ENCODE measurements at regions of chr5 and their contacts with region 1.

Region 1: GRCh38 chr5:126354012-126354857 is 69.0 kb upstream of the GRAMD2B start:
- DNase-seq: peak in 4 of 5 donors; percentile 48 to 51 (median 50)
- H3K4me3 ChIP-seq: no peak overlapping the region
- H3K4me3 Mint-ChIP-seq: peak overlapping the region in 6 of 8 donors; percentile 27 to 68 (median 64)
- H3K27ac ChIP-seq: no peak overlapping the region
- H3K27ac Mint-ChIP-seq: peak overlapping the region in 4 of 7 donors; percentile 7 to 65 (median 50)
- H3K4me1 ChIP-seq: peaks cover 4% of the 10 kb centered on the region
- H3K4me1 Mint-ChIP-seq: peaks cover 4 to 12% (median 5%) of the 10 kb centered on the region in 4 donors
- H3K27me3 ChIP-seq: no peaks in the 10 kb centered on the region
- H3K27me3 Mint-ChIP-seq: peaks cover 7 to 8% of the 10 kb centered on the region in 2 donors

Region 2: GRCh38 chr5:126309860-126310259 is 44.4 kb before region 1 on chr5:
- CTCF ChIA-PET with region 1: no interaction called
- POLR2A ChIA-PET with region 1: no interaction called
- intact Hi-C with region 1: no loop called
- DNase-seq: no peak
- H3K4me3 ChIP-seq: no peak overlapping the region
- H3K4me3 Mint-ChIP-seq: no peak overlapping the region
- H3K27ac ChIP-seq: no peak overlapping the region
- H3K27ac Mint-ChIP-seq: no peak overlapping the region
- H3K4me1 ChIP-seq: no peaks in the 10 kb centered on the region
- H3K4me1 Mint-ChIP-seq: no peaks in the 10 kb centered on the region
- H3K27me3 ChIP-seq: no peaks in the 10 kb centered on the region
- H3K27me3 Mint-ChIP-seq: peaks cover 12 to 15% of the 10 kb centered on the region in 2 donors

Region 3: DNA sequence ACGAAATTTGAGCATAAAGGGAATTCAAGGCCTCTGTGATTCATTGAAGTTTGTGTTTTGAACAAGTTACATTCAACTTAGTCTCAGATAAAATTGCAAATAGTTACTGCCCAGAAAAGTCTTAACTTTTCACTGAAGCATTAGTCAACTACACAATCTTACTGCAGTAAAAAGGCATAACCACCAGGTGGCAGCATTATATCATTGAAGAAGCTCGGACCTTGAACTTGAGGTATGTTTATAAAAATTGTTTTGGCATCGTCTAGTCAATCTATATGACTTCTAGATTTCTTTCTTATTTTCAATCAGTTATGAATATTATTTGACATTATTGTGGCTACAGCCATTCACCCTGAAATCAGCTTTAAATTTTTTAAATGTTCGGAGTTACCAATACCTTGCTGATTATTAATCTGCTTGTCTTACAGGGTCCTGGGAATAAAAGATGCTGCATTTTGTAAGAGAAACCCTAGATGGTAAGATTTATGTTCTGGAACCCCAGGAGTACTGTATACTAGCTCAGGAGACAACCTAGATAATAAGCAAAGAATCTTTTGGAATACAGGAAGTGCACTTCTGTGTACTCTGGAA is 14.9 kb before region 1 on chr5:
- CTCF ChIA-PET with region 1: interaction called, 70 read pairs
- POLR2A ChIA-PET with region 1: interaction called, 3 read pairs
- intact Hi-C with region 1: loop called (anchors 1 kb)
- DNase-seq: peak; percentile 56 to 66 (median 58)
- H3K4me3 ChIP-seq: no peak overlapping the region
- H3K4me3 Mint-ChIP-seq: no peak overlapping the region
- H3K27ac ChIP-seq: no peak overlapping the region
- H3K27ac Mint-ChIP-seq: no peak overlapping the region
- H3K4me1 ChIP-seq: no peaks in the 10 kb centered on the region
- H3K4me1 Mint-ChIP-seq: no peaks in the 10 kb centered on the region
- H3K27me3 ChIP-seq: no peaks in the 10 kb centered on the region
- H3K27me3 Mint-ChIP-seq: peaks cover 9 to 21% of the 10 kb centered on the region in 2 donors

Region 4: GRCh38 chr5:126490167-126490940 is 136.1 kb after region 1 on chr5:
- CTCF ChIA-PET with region 1: interaction called, 5 read pairs
- POLR2A ChIA-PET with region 1: no interaction called
- intact Hi-C with region 1: loop called (anchors 1 kb)
- DNase-seq: no peak
- H3K4me3 ChIP-seq: no peak overlapping the region
- H3K4me3 Mint-ChIP-seq: no peak overlapping the region
- H3K27ac ChIP-seq: no peak overlapping the region
- H3K27ac Mint-ChIP-seq: peak overlapping the region in 3 of 7 donors; percentile 24 to 84 (median 65)
- H3K4me1 ChIP-seq: no peaks in the 10 kb centered on the region
- H3K4me1 Mint-ChIP-seq: no peaks in the 10 kb centered on the region
- H3K27me3 ChIP-seq: no peaks in the 10 kb centered on the region
- H3K27me3 Mint-ChIP-seq: no peaks in the 10 kb centered on the region

Region 5: GRCh38 chr5:126536874-126537273 is 182.6 kb after region 1 on chr5:
- CTCF ChIA-PET with region 1: interaction called, 114 read pairs
- POLR2A ChIA-PET with region 1: no interaction called
- intact Hi-C with region 1: no loop called
- DNase-seq: no peak
- H3K4me3 ChIP-seq: no peak overlapping the region
- H3K4me3 Mint-ChIP-seq: no peak overlapping the region
- H3K27ac ChIP-seq: no peak overlapping the region
- H3K27ac Mint-ChIP-seq: no peak overlapping the region
- H3K4me1 ChIP-seq: no peaks in the 10 kb centered on the region
- H3K4me1 Mint-ChIP-seq: peaks cover 0 to 1% (median 0%) of the 10 kb centered on the region in 4 donors
- H3K27me3 ChIP-seq: no peaks in the 10 kb centered on the region
- H3K27me3 Mint-ChIP-seq: peaks cover 1 to 2% of the 10 kb centered on the region in 2 donors

Region 6: DNA sequence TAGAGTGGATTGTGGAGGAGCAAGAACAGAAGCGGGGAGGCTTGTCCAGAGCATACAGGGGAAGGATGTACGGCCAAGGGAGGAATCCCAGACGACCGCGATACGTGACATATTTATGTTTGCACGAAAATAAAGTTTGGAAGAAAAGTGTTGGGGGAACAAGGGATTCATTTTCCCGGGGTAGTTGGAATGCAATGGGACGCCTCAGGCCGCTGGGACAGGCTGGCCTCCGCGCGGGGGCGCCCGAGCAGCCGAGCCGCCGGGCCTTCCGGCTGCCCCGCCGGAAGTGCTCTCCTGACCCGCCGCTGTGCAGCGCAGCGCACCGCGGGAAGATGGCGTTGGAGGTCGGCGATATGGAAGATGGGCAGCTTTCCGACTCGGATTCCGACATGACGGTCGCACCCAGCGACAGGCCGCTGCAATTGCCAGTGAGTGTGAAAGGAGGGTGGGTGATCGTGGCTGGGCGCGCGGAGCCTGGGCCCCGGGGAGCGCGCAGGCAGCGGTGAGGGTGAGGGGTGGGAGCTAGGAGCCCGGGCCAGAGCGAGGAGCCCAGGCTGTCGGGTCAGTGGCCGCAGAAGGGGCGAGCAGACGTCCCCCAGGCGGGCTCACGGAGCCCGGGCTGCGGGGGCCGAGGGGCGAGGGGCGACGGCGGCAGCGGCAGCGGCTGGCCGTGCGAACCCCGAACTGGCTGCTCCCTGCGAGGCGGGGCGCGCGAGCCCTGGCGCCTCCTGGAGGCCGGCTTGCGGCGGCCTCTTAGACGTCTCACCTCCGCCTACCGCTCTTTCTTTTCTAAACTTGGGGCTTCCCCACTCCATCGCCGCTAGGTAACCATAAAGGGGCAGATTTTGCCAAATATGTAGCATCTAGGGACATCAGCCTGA is 246.6 kb after region 1 on chr5 and contains the start of gene PHAX:
- CTCF ChIA-PET with region 1: interaction called, 4 read pairs
- POLR2A ChIA-PET with region 1: no interaction called
- intact Hi-C with region 1: loop called (anchors 1 kb)
- DNase-seq: peak; percentile 68 to 75 (median 74)
- H3K4me3 ChIP-seq: peak within 1 kb of the TSS; percentile 50 to 95
- H3K4me3 Mint-ChIP-seq: peak within 1 kb of the TSS; percentile 96 to 99 (median 97)
- H3K27ac ChIP-seq: peak within 1 kb of the TSS; percentile 80
- H3K27ac Mint-ChIP-seq: peak within 1 kb of the TSS; percentile 84 to 99 (median 96)
- H3K4me1 ChIP-seq: peaks cover 31% of the 10 kb centered on the region
- H3K4me1 Mint-ChIP-seq: peaks cover 22 to 46% (median 34%) of the 10 kb centered on the region in 4 donors
- H3K27me3 ChIP-seq: no peaks in the 10 kb centered on the region
- H3K27me3 Mint-ChIP-seq: no peaks in the 10 kb centered on the region
- total RNA-seq, gene PHAX: 41.2 to 43.4 TPM